RWPE1 (cell line): ENCODE measurements at regions of chr12 and their contacts with region 1.

Region 1: DNA sequence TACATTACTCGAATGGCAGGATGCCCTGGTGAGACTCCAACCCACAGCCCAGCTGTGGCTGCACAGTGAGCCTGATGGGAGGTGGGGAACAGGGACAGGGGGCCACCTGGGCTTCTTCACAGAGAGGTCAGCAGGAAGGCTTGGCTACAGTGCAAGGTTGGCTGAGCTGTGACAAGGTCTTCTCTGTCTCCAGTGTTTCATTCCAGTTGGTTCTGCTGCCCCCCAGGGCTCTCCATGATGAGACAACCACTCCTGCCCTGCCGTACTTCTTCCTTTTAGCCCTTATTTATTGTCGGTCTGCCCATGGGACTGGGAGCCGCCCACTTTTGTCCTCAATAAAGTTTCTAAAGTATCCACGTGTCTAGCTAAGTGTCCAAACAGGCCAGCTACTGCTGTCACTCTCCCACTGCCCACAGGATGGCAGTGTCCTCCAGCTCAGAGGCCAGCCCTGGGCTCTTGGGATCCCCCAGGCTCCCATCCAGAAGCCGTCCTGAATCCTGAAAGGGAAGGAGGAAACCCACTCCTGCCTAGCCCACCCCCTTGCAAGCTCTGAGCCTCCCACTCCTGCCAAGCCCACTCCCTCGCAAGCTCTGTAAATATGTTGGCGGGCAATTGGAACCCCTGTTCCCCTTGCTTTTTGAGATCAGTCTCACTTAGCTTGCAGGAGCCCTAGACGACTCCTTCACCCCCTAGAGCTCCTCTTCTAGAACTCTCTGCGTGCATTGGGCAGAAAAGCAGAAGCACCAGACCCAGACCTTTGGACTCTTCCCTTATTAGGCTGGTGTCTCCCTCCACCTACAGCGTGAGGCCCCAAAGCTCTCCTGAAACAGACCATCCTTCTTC is 5.4 kb downstream of the C1QL4 start:
- DNase-seq: peak; percentile 72
- H3K27ac ChIP-seq: peak overlapping the region; percentile 54
- CTCF ChIP-seq: peak; percentile 85

Region 2: DNA sequence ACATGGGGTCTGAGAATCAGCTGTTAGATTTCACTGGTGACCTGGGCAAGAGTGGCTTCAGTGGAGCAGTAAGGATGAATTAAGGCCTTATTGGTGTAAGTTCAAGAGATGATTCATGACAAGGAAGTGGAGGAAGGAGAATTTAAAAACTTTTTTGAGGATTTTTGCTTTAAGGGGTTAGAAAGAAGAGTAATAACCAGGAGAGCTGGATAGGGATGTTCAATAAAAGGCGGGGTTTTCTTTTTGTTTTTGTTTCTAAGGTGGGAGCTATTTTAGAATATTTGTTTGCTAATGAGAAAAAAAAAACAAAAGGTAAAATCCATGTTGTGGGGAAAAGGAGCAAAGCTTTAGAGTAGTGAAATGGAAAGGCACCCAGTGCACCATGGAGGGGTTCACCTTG is 185.2 kb before region 1 on chr12:
- CTCF ChIA-PET with region 1: no interaction called
- POLR2A ChIA-PET with region 1: no interaction called
- DNase-seq: no peak
- H3K27ac ChIP-seq: no peak overlapping the region
- CTCF ChIP-seq: no peak

Region 3: GRCh38 chr12:49342066-49342913 is 10.7 kb after region 1 on chr12:
- CTCF ChIA-PET with region 1: interaction called, 30 read pairs
- POLR2A ChIA-PET with region 1: no interaction called
- DNase-seq: no peak
- H3K27ac ChIP-seq: no peak overlapping the region
- CTCF ChIP-seq: peak; percentile 86

Region 4: GRCh38 chr12:49347384-49348237 is 16.0 kb after region 1 on chr12:
- CTCF ChIA-PET with region 1: interaction called, 30 read pairs
- POLR2A ChIA-PET with region 1: no interaction called
- DNase-seq: peak; percentile 84
- H3K27ac ChIP-seq: no peak overlapping the region; the same call in 1 of the 2 replicates
- CTCF ChIP-seq: peak; percentile 96

Region 5: GRCh38 chr12:49515266-49515665 is 183.7 kb after region 1 on chr12:
- CTCF ChIA-PET with region 1: interaction called, 16 read pairs
- POLR2A ChIA-PET with region 1: no interaction called
- DNase-seq: peak; percentile 66
- H3K27ac ChIP-seq: peak overlapping the region; percentile 59
- CTCF ChIP-seq: no peak